ENCODE measurements at regions of chr9 and their contacts with region 1.

Region 1: DNA sequence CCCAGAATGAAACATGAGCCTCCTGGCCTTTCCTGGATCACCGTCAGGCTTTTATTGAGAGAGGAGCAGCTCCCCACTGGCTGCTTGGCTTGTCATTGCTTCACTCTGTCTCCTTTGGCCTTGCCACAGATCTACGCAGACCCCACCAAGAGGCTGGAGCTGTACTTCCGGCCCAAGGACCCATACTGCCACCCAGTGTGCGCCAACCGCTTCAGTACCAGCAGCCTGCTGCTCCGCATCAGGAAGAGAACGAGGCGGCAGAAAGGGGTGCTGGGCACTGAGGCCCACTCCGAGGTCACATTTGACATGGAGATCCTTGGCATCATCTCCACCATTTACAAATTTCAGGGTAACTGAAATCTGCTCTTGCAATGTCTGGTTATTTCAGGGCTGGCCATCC is 11.2 kb downstream of the GTF3C5 start:
- DNase-seq: no peak

Region 2: GRCh38 chr9:133030317-133031129 is 11.4 kb before region 1 on chr9 and contains the start of gene GTF3C5:
- CTCF ChIA-PET with region 1: no interaction called
- POLR2A ChIA-PET with region 1: interaction called, 20 read pairs
- DNase-seq: peak; percentile 95

Region 3: DNA sequence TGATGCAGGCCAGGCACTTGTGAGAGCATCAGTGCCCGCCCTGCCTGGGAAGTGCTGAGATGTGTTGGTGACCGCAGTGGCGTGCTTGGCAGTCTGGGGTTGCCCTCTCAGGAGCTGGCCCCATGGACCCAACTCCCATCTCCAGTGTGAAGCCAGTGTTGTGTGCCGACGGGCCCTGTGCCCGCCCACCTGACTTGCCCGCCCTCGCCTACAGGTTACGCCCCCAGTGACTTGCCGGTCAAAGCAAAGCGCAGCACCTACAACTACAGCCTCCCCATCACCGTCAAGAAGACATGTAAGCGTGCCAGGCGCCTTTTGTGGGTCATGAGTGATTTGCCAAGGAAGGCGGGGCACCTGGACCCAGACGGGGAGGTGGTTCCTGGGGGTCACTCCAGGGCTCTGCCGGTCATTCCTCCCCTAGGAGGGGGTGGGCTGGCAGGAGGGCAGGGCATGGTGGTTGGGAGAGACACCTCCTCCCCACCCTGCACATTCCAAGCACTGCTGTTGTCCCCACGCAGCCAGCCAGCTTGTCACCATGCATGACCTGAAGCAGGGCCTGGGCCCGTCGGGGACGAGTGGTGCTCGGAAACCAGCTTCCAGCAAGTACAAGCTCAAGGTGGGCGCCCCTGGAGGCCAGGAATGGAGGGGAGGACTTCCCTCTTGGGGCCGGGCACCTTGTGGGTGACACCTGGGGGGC is 12.4 kb after region 1 on chr9:
- CTCF ChIA-PET with region 1: no interaction called
- POLR2A ChIA-PET with region 1: no interaction called
- DNase-seq: no peak